A549 (cell line): ENCODE measurements at regions of chr15 and their contacts with region 1.

Region 1: GRCh38 chr15:78909791-78910228 is 35.0 kb downstream of the CTSH start:
- DNase-seq: peak; percentile 63 to 72
- ATAC-seq: peak; percentile 63 to 83
- H3K4me3 ChIP-seq: no peak overlapping the region
- H3K27ac ChIP-seq: no peak overlapping the region
- H3K4me1 ChIP-seq: peaks cover 21% of the 10 kb centered on the region
- CTCF ChIP-seq: peak; percentile 87
- EP300 ChIP-seq: no peak
- POLR2A ChIP-seq: no peak
- RAD21 ChIP-seq: peak; percentile 75 to 81

Region 2: DNA sequence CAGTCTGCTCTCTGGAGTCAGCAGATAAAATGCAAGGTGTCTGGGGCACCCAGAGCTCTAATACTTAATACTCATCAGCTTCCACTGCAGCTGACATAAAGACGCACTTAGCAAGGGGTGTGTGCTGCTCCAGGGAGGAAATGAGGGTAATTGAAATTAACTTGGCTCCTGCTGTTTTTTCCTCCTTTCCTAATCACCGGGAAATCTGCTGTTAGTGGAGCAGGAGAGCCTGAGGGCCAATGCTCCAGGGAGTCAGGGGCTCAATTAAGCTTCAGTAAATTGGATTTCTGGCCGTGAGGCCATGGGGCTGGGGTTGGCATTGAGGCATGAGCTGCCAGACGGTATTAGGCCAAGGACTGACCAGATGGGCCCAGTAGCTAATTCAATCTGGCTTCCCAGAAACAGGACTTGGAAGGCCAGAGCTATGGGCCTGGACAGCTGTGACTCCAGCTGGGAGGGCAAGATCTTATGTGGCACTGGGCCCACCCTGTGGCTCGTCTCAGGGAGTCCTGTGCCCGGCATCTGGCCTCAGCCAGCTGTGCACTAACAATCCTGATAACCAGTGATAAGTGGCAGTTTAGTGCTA is 238.1 kb before region 1 on chr15:
- CTCF ChIA-PET with region 1: no interaction called
- POLR2A ChIA-PET with region 1: no interaction called
- DNase-seq: no peak
- ATAC-seq: no peak
- H3K4me3 ChIP-seq: no peak overlapping the region
- H3K27ac ChIP-seq: peak overlapping the region in 1 of 2 experiments; percentile 61; a peak in 3 of 6 replicates
- H3K4me1 ChIP-seq: peaks cover 6% of the 10 kb centered on the region; the same call in 1 of the 3 replicates
- CTCF ChIP-seq: no peak
- EP300 ChIP-seq: no peak
- POLR2A ChIP-seq: no peak
- RAD21 ChIP-seq: no peak

Region 3: GRCh38 chr15:78898540-78898939 is 11.3 kb before region 1 on chr15:
- CTCF ChIA-PET with region 1: interaction called, 32 read pairs
- POLR2A ChIA-PET with region 1: interaction called, 4 read pairs
- DNase-seq: no peak
- ATAC-seq: no peak
- H3K4me3 ChIP-seq: no peak overlapping the region
- H3K27ac ChIP-seq: no peak overlapping the region
- H3K4me1 ChIP-seq: no peaks in the 10 kb centered on the region
- CTCF ChIP-seq: no peak
- EP300 ChIP-seq: no peak
- POLR2A ChIP-seq: no peak
- RAD21 ChIP-seq: no peak

Region 4: GRCh38 chr15:78930556-78931401 is 21.0 kb after region 1 on chr15:
- CTCF ChIA-PET with region 1: interaction called, 58 read pairs
- POLR2A ChIA-PET with region 1: no interaction called
- DNase-seq: peak; percentile 68 to 82
- ATAC-seq: peak; percentile 57 to 73
- H3K4me3 ChIP-seq: no peak overlapping the region
- H3K27ac ChIP-seq: peak overlapping the region; percentile 58 to 84; a peak in 5 of 6 replicates
- H3K4me1 ChIP-seq: peaks cover 17% of the 10 kb centered on the region
- CTCF ChIP-seq: no peak
- EP300 ChIP-seq: no peak
- POLR2A ChIP-seq: no peak
- RAD21 ChIP-seq: no peak

Region 5: GRCh38 chr15:79004336-79004735 is 94.5 kb after region 1 on chr15:
- CTCF ChIA-PET with region 1: interaction called, 16 read pairs
- POLR2A ChIA-PET with region 1: no interaction called
- DNase-seq: peak in 1 of 2 experiments; percentile 72
- ATAC-seq: peak; percentile 35 to 73; a peak in 5 of 6 replicates
- H3K4me3 ChIP-seq: no peak overlapping the region
- H3K27ac ChIP-seq: peak overlapping the region; percentile 46 to 80
- H3K4me1 ChIP-seq: peaks cover 11% of the 10 kb centered on the region
- CTCF ChIP-seq: no peak
- EP300 ChIP-seq: no peak
- POLR2A ChIP-seq: no peak
- RAD21 ChIP-seq: no peak